Natural killer cell (primary cell): ENCODE measurements at regions of chr9 and their contacts with region 1.

Region 1: DNA sequence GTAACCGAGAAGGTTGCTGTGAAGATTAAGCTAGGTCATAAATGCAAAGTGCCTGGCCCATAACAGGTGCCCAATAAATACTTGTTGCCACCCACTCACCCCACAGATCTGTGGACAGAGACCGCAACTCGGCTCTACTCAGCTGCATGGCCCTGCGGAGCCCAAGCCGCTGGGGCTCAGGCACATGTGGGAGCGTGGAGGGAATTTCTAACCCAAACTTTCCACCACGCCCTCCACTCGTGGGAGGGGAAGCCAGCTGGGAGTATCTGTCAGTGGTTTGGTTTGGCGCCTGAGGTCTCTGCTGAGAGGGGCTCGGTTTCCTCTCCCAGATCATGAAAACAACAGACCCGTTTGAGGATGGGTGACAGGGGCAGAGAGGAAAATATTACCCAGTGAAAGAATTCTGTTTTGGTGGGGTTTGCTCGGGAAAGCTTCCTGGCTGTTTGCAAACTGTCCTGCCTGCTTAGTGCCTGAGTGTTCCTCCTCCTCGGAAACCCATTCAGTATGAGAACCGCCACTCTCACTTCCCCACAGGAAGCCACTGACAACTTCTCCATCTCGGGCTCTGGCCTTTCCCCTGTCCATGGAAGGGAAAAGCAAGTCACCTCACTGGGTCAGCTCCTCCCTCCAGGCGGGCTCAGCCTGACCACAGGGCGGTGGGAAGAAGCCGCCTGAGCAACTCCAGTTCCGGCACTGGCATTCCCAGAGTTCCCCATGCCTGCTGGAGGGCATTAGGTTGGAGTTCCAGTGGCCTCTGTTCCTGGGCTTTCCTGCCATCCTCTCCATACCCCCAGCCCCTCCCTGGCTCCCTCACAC is 60.1 kb downstream of the RGS3 start:
- DNase-seq: peak; percentile 51 to 80
- ATAC-seq: peak; percentile 9 to 49 (median 35)
- H3K4me3 ChIP-seq: peak overlapping the region; percentile 26
- H3K4me3 Mint-ChIP-seq: peak overlapping the region; percentile 91
- H3K27ac ChIP-seq: peak overlapping the region; percentile 70
- H3K27ac Mint-ChIP-seq: peak overlapping the region; percentile 88 to 98
- H3K4me1 ChIP-seq: peaks cover 82% of the 10 kb centered on the region
- H3K4me1 Mint-ChIP-seq: peaks cover 96 to 97% of the 10 kb centered on the region in 2 donors
- H3K27me3 ChIP-seq: no peaks in the 10 kb centered on the region
- H3K27me3 Mint-ChIP-seq: no peaks in the 10 kb centered on the region
- CTCF ChIP-seq: no peak

Region 2: DNA sequence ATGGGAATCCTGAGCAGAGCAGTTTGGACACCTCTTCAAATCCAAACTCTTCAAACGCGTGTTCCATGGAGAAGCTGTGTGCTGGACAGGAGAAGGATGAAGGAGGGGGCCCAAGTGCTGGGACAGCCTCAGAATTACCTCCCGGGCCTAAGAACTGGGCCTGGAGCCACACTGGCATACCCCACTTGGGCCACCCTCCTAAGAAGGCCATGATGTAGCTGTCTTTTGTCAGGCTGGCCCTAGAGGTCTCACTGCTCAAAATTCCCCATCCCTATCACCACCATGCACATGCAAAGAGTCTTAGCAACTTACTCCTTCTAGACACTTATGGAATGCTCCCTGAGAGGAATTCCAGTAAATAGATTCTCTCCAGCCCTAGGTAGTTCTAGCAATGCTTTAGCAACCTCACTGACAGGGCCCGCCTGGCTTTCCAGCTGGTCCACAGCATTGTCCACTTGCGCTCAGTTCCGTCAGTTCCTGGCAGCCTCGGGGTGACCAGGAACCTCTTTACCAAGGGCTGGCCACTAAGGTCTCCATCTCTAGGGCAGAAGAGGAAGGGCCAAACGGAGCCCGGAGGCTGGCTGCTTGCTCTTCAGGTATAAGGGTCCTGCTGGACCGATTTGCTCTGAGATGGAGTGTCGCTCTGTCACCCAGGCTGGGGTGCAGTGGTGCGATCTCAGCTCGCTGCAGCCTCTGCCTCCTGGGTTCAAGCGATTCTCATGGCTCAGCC is 15.2 kb after region 1 on chr9:
- intact Hi-C with region 1: loop called (anchors 2 kb)
- DNase-seq: no peak
- ATAC-seq: no peak
- H3K4me3 ChIP-seq: no peak overlapping the region
- H3K4me3 Mint-ChIP-seq: peak overlapping the region; percentile 37
- H3K27ac ChIP-seq: no peak overlapping the region
- H3K27ac Mint-ChIP-seq: peak overlapping the region; percentile 92 to 98
- H3K4me1 ChIP-seq: peaks cover 87% of the 10 kb centered on the region
- H3K4me1 Mint-ChIP-seq: peaks cover 85 to 86% of the 10 kb centered on the region in 2 donors
- H3K27me3 ChIP-seq: no peaks in the 10 kb centered on the region
- H3K27me3 Mint-ChIP-seq: no peaks in the 10 kb centered on the region
- CTCF ChIP-seq: no peak

Region 3: GRCh38 chr9:113591001-113591898 is 67.6 kb after region 1 on chr9:
- intact Hi-C with region 1: no loop called
- DNase-seq: peak; percentile 52 to 66
- ATAC-seq: peak; percentile 58 to 65 (median 59)
- H3K4me3 ChIP-seq: no peak overlapping the region
- H3K4me3 Mint-ChIP-seq: peak overlapping the region; percentile 28
- H3K27ac ChIP-seq: peak overlapping the region; percentile 21
- H3K27ac Mint-ChIP-seq: peak overlapping the region; percentile 89 to 93
- H3K4me1 ChIP-seq: peaks cover 65% of the 10 kb centered on the region
- H3K4me1 Mint-ChIP-seq: peaks cover 52 to 73% of the 10 kb centered on the region in 2 donors
- H3K27me3 ChIP-seq: no peaks in the 10 kb centered on the region
- H3K27me3 Mint-ChIP-seq: no peaks in the 10 kb centered on the region
- CTCF ChIP-seq: peak; percentile 69

Region 4: DNA sequence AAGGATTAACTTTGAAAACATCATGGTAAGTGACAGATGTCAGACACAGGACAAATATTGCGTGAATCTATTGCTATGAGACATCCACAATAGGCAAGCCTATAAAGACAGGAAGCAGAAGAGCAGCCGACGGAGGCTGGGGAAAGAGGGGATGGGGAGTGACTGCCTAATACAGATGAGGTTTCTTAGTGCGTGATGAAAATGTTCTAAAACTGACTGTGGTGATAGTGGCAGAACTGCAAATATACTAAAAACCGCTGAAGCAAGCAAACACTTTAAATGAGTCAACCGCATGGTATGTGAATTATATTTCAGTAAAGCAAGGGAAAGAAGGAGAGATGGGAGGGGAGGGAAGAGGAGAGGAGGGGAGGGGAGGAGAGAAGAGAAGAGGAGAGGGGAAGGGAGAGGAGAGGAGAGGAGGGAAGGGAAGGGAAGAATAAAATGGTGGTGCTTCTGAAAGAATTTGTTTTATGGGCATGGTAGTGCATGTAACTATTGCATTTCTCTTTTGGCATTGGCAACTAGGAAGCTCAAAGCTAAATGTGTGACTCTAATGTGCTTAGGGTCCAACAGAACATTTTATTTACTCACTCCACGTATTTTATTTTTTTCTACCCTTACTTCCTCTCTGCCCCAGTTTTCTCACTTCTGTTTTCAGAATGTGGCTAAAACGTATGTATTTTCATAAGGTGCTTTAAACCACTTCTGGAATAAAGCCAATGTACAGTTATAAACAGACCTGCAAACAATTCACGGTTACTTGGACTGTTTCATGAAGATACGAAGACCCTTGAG is 842.9 kb after region 1 on chr9:
- intact Hi-C with region 1: loop called (anchors 5 kb)
- DNase-seq: peak in 1 of 2 donors; percentile 78
- ATAC-seq: peak; percentile 27 to 49 (median 33)
- H3K4me3 ChIP-seq: no peak overlapping the region
- H3K4me3 Mint-ChIP-seq: peak overlapping the region; percentile 77
- H3K27ac ChIP-seq: peak overlapping the region; percentile 100
- H3K27ac Mint-ChIP-seq: peak overlapping the region; percentile 79 to 86
- H3K4me1 ChIP-seq: peaks cover 89% of the 10 kb centered on the region
- H3K4me1 Mint-ChIP-seq: peaks cover 54 to 69% of the 10 kb centered on the region in 2 donors
- H3K27me3 ChIP-seq: no peaks in the 10 kb centered on the region
- H3K27me3 Mint-ChIP-seq: no peaks in the 10 kb centered on the region
- CTCF ChIP-seq: no peak